ENCODE measurements at regions of chr16 and their contacts with region 1.

Region 1: DNA sequence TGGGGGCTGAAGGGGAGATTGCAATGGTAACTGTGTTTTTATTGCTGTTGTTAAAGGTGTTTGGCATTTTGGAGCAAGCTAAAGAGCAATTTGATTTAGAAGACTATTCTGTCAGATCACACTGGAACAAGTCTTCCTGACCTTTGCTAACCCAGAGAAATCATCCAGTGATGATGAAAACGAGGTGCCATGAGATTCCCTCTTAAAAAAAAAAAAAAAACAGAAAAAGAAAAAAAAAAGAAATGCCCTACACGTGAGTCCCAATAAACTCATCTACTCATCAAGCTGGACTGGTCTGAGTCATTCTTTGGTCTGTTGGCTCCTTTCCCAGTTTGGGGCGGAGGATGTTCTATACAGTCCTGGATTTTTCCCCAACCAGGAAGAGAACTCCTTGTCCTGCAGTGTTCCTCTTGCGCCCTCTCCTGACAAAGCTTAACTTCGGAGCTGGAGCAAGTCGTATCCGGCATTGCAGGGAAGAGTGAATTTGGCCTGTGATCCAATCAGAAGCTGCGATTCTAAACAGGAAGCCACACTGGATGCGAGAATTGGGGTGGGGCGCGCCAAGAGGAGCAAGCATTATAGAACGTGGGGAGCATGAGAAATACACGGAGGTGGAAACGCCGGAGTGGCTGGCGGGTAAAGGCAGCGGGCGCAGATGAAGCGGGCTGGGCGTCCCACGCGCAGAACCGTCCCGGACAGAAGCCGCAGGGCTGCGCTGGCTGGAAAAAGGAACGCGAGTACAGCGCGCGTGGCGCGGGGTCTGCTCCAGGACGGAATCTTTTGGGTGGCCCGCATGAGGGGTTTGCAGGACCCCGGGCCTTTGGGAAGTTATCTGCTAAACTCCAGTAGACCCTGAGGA is 22.4 kb upstream of the CRYM start:
- DNase-seq: peak; percentile 91

Region 2: GRCh38 chr16:21075252-21075651 is 225.3 kb before region 1 on chr16:
- intact Hi-C with region 1: no loop called
- DNase-seq: no peak

Region 3: GRCh38 chr16:21184834-21185233 is 115.7 kb before region 1 on chr16:
- intact Hi-C with region 1: loop called (anchors 1 kb)
- DNase-seq: no peak

Region 4: GRCh38 chr16:21283521-21284289 is 16.8 kb before region 1 on chr16:
- intact Hi-C with region 1: loop called (anchors 2 kb)
- DNase-seq: peak; percentile 85

Measured in cardiac septum (tissue), 1 donor.